Ascending aorta (tissue), 2 donors: ENCODE measurements at regions of chr22 and their contacts with region 1.

Region 1: DNA sequence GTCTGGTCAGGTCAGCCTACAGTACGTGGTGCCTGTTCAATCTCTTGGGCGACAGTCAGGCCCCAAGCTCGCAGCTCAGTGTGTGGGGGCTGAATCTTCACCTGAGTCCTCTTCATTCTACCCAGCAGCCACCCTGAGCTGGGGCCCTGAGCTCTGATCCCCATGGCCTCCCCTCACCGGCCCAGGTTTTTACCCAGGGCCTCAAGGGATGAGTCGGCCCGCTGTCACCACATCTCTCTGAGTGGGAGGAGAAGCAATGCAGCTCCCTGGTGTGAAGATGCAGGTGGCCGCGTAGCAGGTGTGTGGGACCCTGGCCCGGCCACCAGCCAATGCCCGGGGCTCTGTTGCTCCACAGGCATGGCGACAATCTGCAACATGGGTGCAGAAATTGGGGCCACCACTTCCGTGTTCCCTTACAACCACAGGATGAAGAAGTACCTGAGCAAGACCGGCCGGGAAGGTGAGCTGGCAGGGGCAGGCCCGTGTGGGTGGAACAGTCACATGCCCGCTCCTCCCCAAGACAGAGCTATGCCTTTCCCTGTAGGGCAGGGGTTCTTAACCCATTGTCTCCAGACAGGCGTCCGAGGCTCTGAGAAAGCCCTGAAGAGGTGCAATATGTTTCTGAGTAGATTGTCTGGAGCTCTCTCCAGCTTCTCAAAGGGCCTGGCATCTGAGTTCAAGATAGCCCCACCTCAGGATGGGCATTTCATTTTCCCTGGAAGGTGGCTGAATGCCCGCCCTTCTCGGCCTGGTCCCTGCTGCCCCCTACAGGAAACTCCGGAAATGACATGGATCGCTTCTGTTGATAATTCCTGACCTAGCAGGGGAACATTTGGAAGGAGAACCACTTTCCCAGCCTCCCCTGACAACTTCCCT is 26.9 kb downstream of the POLR3H start:
- DNase-seq: peak in 1 of 2 donors; percentile 89
- H3K4me3 ChIP-seq: no peak overlapping the region
- H3K27ac ChIP-seq: peak overlapping the region; percentile 27 to 44
- H3K4me1 ChIP-seq: peaks cover 0 to 12% of the 10 kb centered on the region in 2 donors
- H3K27me3 ChIP-seq: no peaks in the 10 kb centered on the region
- CTCF ChIP-seq: peak; percentile 82 to 90 (median 89)

Region 2: DNA sequence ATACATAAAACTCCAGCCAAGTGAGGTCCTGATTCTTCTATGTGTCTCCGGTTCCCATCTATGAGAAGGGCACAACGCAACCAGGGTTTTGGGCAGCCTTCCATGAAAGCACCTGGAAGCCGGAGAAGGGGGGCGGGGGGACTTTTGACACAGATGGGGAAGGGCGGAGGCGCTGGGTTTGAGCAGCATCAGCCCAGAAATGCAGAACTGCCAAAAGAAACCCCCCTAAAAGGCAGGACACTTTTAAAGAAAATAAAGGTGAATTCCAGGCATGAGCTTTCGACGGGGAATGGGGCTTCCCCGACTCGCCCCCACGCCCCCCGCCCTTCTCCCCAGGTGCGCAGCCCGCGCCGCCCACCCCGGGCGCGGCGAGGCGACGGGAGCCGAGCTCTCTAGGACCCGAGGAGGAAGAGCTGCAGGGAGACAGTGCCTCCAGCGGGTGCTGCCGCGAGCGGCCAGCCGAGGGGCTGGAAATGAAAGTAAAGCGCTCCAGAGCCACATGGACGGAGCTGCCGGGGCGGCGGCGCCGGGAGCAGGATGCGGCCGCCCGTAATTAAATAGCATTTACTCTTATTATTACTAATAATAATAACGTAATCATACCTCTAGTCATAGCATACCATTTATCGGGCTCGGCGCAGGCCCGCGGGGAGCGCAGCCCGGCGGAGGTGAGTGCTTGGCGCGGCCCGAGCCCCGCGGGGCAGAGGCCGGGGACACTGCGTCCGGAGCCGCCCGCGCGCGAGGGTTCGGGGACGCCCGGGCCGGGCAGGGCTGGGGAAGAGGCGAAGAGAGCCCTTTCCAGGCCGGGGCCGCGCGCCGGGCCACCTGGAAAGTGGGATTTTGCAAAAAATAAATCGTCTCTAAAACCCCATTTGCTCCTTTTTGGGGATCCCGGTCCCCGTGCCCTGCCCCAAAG is 216.0 kb before region 1 on chr22 and contains the start of gene ZC3H7B:
- intact Hi-C with region 1: loop called (anchors 5 kb)
- DNase-seq: peak; percentile 24 to 90
- H3K4me3 ChIP-seq: peak within 1 kb of the TSS; percentile 78 to 86
- H3K27ac ChIP-seq: peak within 1 kb of the TSS; percentile 81 to 86
- H3K4me1 ChIP-seq: peaks cover 0 to 7% of the 10 kb centered on the region in 2 donors
- H3K27me3 ChIP-seq: no peaks in the 10 kb centered on the region
- CTCF ChIP-seq: peak; percentile 22 to 73 (median 61)
- total RNA-seq, gene ZC3H7B: 54.9 TPM

Region 3: GRCh38 chr22:41403532-41404318 is 113.7 kb before region 1 on chr22:
- intact Hi-C with region 1: loop called (anchors 1 kb)
- DNase-seq: peak; percentile 95 to 99
- H3K4me3 ChIP-seq: no peak overlapping the region
- H3K27ac ChIP-seq: peak overlapping the region; percentile 43 to 61
- H3K4me1 ChIP-seq: peaks cover 0 to 10% of the 10 kb centered on the region in 2 donors
- H3K27me3 ChIP-seq: no peaks in the 10 kb centered on the region
- CTCF ChIP-seq: peak; percentile 95 to 99 (median 98)

Region 4: DNA sequence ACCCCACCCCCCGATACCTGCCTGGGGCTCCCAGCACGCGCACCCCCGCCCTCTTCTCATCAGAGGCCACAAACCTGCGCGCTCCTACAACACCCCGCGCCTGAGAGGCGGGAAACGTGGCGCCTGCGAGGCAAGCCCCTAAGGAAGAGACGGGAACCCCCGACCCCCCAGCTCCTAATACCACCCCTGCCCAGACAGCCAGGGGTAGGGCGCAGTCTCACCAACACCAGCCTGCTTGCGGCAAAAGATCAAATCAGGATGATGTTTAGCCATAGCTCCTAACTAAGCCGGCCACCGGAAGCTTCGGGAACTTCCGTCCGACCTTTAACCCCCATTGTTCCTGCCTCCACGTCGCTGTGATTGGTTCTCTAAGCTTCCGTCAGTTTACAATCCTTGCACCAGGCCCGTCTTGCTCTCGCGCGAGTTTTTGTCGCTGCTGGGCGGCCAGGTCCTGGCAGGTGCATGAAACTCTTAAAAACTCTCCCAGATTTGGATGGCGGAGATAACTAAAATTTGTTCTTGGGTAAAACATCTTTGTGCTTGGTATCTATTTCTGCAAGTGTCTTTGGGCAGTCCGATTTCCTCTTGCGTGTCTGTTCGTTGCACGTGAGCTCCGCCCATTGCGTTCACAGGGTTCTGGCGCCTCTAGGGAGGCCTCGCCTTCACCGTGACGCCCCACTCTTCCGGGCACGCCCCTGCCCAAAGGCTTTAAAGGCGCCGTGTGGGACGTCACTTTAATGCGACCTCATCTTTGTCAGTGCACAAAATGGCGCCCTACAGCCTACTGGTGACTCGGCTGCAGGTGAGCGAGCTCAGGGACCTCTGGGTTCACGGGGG is 48.8 kb before region 1 on chr22 and contains the starts of genes ACO2 and PHF5A:
- intact Hi-C with region 1: loop called (anchors 5 kb)
- DNase-seq: peak; percentile 87 to 98
- H3K4me3 ChIP-seq: peak within 1 kb of the TSS; percentile 94 to 97
- H3K27ac ChIP-seq: peak within 1 kb of the TSS; percentile 93 to 96
- H3K4me1 ChIP-seq: peaks cover 3 to 17% of the 10 kb centered on the region in 2 donors
- H3K27me3 ChIP-seq: no peaks in the 10 kb centered on the region
- CTCF ChIP-seq: no peak
- total RNA-seq, gene ACO2: 81.1 TPM
- total RNA-seq, gene PHF5A: 4.8 TPM

Region 5: GRCh38 chr22:41479671-41480396 is 37.6 kb before region 1 on chr22:
- intact Hi-C with region 1: loop called (anchors 5 kb)
- DNase-seq: peak in 1 of 2 donors; percentile 68
- H3K4me3 ChIP-seq: no peak overlapping the region
- H3K27ac ChIP-seq: peak overlapping the region; percentile 76 to 85
- H3K4me1 ChIP-seq: peaks cover 25 to 47% of the 10 kb centered on the region in 2 donors
- H3K27me3 ChIP-seq: no peaks in the 10 kb centered on the region
- CTCF ChIP-seq: no peak

Region 6: GRCh38 chr22:41557401-41558240 is 40.2 kb after region 1 on chr22:
- intact Hi-C with region 1: no loop called
- DNase-seq: peak; percentile 54 to 88
- H3K4me3 ChIP-seq: peak overlapping the region in 1 of 2 donors; percentile 24
- H3K27ac ChIP-seq: peak overlapping the region; percentile 83 to 91
- H3K4me1 ChIP-seq: peaks cover 0 to 25% of the 10 kb centered on the region in 2 donors
- H3K27me3 ChIP-seq: no peaks in the 10 kb centered on the region
- CTCF ChIP-seq: no peak